Lower lobe of right lung (tissue), 2 donors: ENCODE measurements at regions of chr5 and their contacts with region 1.

Region 1: GRCh38 chr5:173972925-173973615 is 15.9 kb upstream of the C5orf47 start:
- DNase-seq: peak; percentile 83
- ATAC-seq: peak; percentile 87 to 93
- H3K4me3 ChIP-seq: peak overlapping the region; percentile 59
- H3K27ac ChIP-seq: peak overlapping the region; percentile 33
- H3K4me1 ChIP-seq: peaks cover 12% of the 10 kb centered on the region
- H3K27me3 ChIP-seq: no peaks in the 10 kb centered on the region
- CTCF ChIP-seq: peak; percentile 85

Region 2: GRCh38 chr5:173615884-173616576 is 357.0 kb before region 1 on chr5:
- intact Hi-C with region 1: loop called (anchors 5 kb)
- DNase-seq: peak; percentile 73
- ATAC-seq: peak; percentile 81 to 85
- H3K4me3 ChIP-seq: peak overlapping the region; percentile 90
- H3K27ac ChIP-seq: peak overlapping the region; percentile 97
- H3K4me1 ChIP-seq: peaks cover 36% of the 10 kb centered on the region
- H3K27me3 ChIP-seq: no peaks in the 10 kb centered on the region
- CTCF ChIP-seq: peak; percentile 53